ENCODE measurements at regions of chr14 and their contacts with region 1.

Region 1: DNA sequence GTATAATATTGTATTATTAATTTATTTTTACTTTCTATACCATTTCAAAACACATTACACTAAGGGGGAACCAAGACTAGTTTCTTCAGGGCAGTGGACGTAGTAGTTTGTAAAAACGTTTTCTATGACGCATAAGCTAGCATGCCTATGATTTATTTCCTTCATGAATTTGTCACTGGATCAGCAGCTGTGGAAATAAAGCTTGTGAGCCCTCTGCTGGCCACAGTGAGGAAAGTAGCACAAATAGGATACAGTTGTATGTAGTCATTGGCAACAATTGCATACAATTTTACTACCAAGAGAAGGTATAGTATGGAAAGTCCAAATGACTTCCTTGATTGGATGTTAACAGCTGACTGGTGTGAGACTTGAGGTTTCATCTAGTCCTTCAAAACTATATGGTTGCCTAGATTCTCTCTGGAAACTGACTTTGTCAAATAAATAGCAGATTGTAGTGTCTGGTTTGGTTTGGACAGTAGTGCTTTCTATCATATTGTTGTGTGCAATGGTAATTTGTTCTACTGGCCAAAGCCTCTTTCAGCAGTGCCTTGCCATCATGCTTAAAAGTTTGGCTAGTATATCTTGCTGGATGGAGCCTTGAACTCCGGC is 24.3 kb upstream of the PLEKHD1 start:
- DNase-seq: peak in 2 of 3 donors; percentile 34 to 58
- ATAC-seq: peak; percentile 92 to 95 (median 94)
- H3K4me3 ChIP-seq: no peak overlapping the region
- H3K27ac ChIP-seq: no peak overlapping the region
- H3K4me1 ChIP-seq: no peaks in the 10 kb centered on the region
- H3K27me3 ChIP-seq: no peaks in the 10 kb centered on the region
- CTCF ChIP-seq: peak; percentile 75 to 91 (median 84)
- POLR2A ChIP-seq: no peak

Region 2: DNA sequence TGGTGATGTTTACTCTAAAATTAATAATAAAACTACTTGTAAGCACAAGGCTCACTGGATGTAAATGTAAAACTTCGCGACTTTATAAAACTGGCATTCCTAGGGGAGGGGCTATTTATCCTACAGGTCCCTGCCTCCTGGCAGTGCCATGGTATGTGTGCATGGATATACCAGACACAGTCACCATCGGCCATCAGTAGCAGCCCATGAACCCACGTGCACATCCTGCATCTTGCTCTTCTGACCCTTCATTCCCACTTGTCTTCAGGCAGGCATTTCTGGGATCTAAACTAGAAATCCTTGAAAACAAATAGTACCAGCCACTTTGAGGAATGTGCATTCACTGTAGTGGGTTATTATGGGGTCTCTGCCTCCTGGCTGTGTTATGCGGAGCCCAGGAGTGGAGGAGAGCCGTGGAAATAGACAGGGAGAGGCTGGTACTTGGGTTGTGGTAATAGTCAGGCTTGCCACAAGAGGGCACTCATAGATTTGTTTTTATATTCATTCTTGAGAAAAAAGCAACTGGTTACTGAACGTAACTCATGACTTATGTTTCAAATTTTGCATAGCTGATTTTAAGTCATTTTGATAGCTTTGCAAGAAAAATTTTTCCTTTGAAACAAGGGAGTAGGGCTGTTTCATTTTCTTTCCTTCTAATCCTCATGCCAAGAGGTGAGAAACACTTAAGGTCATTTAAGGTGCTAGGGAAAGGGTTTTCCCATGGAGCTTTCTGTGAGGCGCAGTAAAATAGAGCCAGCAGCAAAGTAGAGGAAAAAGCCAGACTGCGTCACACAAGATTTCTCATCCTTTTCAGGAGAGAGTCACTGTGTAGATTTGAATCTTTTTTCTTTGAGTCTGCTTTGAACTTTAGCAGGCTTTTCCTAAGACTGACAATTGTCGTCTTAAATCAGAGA is 217.6 kb before region 1 on chr14:
- intact Hi-C with region 1: loop called in 1 of 2 experiments (anchors 5 kb)
- DNase-seq: no peak
- ATAC-seq: peak; percentile 85 to 92 (median 86)
- H3K4me3 ChIP-seq: no peak overlapping the region
- H3K27ac ChIP-seq: no peak overlapping the region
- H3K4me1 ChIP-seq: no peaks in the 10 kb centered on the region
- H3K27me3 ChIP-seq: no peaks in the 10 kb centered on the region
- CTCF ChIP-seq: peak; percentile 72 to 78 (median 76)
- POLR2A ChIP-seq: no peak

Region 3: GRCh38 chr14:69260861-69261564 is 199.2 kb before region 1 on chr14:
- intact Hi-C with region 1: loop called in 1 of 2 experiments (anchors 10 kb)
- DNase-seq: peak; percentile 48 to 66 (median 59)
- ATAC-seq: peak; percentile 82 to 89 (median 84)
- H3K4me3 ChIP-seq: peak overlapping the region; percentile 30 to 57 (median 31)
- H3K27ac ChIP-seq: peak overlapping the region in 1 of 3 donors; percentile 53
- H3K4me1 ChIP-seq: peaks cover 0 to 23% (median 0%) of the 10 kb centered on the region in 4 donors
- H3K27me3 ChIP-seq: no peaks in the 10 kb centered on the region
- CTCF ChIP-seq: peak; percentile 51 to 82 (median 75)
- POLR2A ChIP-seq: no peak